ENCODE measurements at regions of chr10 and their contacts with region 1.

Region 1: GRCh38 chr10:96129387-96130325 is at the start of gene ZNF518A:
- DNase-seq: peak; percentile 90 to 94 (median 92)
- H3K4me3 ChIP-seq: peak within 1 kb of the TSS; percentile 69
- H3K27ac ChIP-seq: peak within 1 kb of the TSS; percentile 73 to 87
- H3K4me1 ChIP-seq: peaks cover 4% of the 10 kb centered on the region
- H3K27me3 ChIP-seq: no peaks in the 10 kb centered on the region
- CTCF ChIP-seq: peak in 1 of 3 donors; percentile 6
- EP300 ChIP-seq: no peak
- POLR2A ChIP-seq: peak; percentile 15
- total RNA-seq, gene ZNF518A: 14.2 to 31.7 (median 17.5) TPM

Region 2: DNA sequence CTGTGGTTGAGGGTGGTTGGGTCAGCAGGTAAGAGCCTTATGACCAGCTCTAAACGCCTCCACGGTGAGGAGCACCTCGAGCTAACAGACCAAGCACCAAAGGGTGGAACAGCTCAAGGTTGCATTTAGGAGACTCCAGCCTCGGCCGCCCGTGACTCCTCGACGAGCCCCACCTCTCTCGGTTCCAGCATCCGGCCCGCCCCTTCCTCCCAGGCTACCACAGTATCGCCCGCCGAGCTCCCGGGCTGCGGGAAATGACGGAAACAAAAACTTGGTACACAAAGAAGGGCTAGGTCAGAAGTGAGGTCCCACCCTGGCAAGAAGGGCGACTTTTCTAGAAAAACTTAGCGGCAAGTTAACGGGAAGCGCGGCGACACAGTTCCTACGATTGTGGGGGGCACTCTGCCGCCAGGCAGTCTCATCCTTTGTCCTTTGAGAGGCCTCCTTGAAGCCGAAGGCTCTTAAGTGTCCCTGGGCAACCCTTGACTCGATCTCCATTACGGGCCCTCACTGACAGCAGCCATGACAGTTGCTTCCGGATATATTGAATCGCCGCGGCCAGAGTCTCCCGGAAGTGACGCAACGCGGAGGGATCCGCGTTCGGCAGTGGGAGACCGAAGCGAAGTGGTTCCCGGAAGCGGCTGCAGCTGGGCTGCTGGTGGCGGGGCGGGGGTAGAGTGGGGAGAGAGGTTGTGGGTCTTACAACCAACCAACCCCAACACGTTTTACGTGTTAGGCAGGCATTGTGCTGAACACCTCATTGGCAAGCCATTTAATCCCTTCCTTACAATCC is 39.8 kb before region 1 on chr10:
- intact Hi-C with region 1: loop called (anchors 1 to 5 kb)
- DNase-seq: peak; percentile 87 to 96 (median 90)
- H3K4me3 ChIP-seq: peak overlapping the region; percentile 70
- H3K27ac ChIP-seq: no peak overlapping the region
- H3K4me1 ChIP-seq: no peaks in the 10 kb centered on the region
- H3K27me3 ChIP-seq: peaks cover 4% of the 10 kb centered on the region
- CTCF ChIP-seq: no peak
- EP300 ChIP-seq: no peak
- POLR2A ChIP-seq: peak; percentile 33